ENCODE measurements at regions of chr7 and their contacts with region 1.

Region 1: GRCh38 chr7:134943764-134944400 is 42.4 kb upstream of the AGBL3 start:
- DNase-seq: peak; percentile 67
- CTCF ChIP-seq: peak; percentile 54

Region 2: DNA sequence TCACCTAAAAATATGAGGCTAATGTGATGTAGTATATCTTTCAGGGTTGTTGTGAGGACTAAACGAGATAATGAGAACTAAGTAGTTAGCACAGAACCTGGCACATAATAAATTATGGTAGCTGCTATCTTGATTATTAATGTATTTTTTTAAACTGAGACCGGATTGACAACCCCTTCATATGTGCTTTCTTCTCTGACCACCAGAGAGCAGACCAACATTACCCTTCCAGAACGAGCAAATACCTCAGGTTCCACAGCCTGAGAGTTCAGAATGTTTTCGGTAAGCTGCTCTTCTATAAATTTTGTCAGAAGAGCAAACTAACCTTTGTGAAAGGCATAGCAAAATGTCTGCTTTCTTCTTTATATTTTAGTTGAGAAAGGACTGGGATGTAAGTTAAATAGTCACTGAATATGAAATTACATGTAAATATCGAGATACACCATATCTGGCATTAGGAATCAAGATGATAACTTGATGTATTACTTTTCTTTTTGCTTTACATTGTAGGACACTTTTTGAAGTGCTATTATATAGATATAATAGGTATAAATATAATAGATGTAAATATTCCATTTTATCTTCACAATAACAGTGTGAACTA is 310.8 kb before region 1 on chr7:
- in situ Hi-C with region 1: loop called (anchors 10 kb)
- DNase-seq: no peak
- CTCF ChIP-seq: peak; percentile 68

Measured in GM13977 (cell line).